ENCODE measurements at regions of chr6 and their contacts with region 1.

Region 1: GRCh38 chr6:152267967-152268845 is 369.0 kb downstream of the SYNE1 start:
- DNase-seq: no peak
- H3K4me3 ChIP-seq: no peak overlapping the region
- H3K27ac ChIP-seq: no peak overlapping the region
- H3K27me3 ChIP-seq: no peaks in the 10 kb centered on the region
- CTCF ChIP-seq: peak; percentile 61

Region 2: GRCh38 chr6:151647976-151648639 is 620.1 kb before region 1 on chr6:
- CTCF ChIA-PET with region 1: interaction called, 16 read pairs
- POLR2A ChIA-PET with region 1: no interaction called
- DNase-seq: no peak
- H3K4me3 ChIP-seq: no peak overlapping the region
- H3K27ac ChIP-seq: no peak overlapping the region
- H3K27me3 ChIP-seq: no peaks in the 10 kb centered on the region
- CTCF ChIP-seq: peak; percentile 10; the same call in 1 of the 2 replicates

Region 3: DNA sequence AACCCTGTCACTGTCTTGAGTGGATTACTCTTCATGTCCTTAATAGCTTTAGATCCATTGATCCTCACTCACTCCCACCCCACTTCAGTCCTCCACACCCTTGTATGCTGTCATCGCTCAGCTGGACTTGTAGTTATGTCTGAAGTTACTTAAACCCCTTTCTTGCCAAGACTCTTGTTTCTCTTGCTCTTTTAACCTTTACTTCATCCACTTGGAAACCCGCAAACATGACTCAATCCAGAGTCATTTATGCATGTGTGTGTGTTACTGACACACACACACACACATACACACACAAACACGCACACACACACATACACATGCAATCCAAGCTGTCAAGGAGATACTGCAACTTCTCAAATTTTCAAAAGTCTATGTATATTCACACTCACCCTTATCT is 27.1 kb after region 1 on chr6:
- CTCF ChIA-PET with region 1: interaction called, 19 read pairs
- POLR2A ChIA-PET with region 1: no interaction called
- DNase-seq: peak; percentile 93
- H3K4me3 ChIP-seq: no peak overlapping the region
- H3K27ac ChIP-seq: no peak overlapping the region
- H3K27me3 ChIP-seq: no peaks in the 10 kb centered on the region
- CTCF ChIP-seq: no peak

Region 4: DNA sequence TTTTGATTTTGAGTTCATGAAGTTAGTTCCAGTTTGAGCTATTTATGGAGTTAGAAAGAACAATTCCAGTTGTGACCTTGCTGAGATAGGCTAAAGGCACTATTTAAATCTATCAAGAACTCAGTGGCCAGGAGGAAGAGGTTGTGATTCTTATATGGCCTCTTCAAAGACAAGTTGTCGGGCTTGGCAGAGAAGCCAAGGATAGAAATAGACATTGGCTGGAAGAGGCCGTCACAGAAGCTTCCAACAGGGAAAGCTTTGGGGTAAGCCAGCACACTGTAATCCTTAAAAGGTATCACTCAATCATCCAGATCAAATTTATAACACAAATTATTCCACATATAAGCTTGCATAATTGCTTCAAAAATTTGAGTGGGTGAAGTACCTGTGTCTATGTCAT is 82.9 kb after region 1 on chr6:
- CTCF ChIA-PET with region 1: no interaction called
- POLR2A ChIA-PET with region 1: no interaction called
- DNase-seq: no peak
- H3K4me3 ChIP-seq: no peak overlapping the region
- H3K27ac ChIP-seq: no peak overlapping the region
- H3K27me3 ChIP-seq: no peaks in the 10 kb centered on the region
- CTCF ChIP-seq: no peak

Region 5: DNA sequence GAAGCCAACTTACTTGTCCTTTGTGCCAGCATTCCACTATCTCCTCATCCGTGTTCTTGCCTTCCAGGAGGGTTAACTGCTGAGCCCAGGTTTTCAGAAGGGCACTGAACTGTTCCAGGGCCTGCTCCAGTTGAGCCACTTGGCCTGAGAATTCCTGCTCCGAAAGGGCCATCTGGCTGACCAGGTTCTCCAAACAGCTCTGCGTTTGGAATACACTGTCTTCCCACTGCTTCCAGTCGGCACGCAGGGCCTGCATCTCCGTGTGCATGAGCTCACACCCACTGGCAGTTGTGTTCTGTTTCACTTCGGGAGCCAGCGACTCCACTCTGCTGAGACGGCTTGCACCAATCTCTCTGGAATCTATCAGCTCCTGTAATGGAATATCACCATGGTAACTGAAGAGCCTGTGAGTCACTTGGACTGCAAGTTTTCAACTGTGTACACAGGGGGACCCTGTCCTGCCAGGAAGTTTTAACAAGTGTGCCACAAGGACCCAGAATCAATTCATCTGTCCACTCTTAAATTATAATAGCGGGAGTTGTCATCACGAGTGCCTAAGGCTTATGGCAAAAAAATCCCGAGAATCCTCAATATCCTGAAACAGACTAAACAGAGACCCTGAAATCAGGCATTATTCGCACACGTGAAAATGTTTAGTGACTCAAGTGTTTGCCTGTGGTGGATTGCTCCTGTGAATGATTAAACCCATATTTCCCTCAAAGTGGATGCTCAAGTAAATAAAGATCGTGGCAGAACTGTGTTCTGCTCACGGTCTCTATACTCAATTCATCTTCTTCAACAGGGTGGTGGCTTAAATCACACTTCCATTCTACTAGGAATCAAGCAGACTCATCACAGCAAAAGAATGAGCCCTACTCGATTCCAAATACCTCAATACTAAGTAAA is 113.0 kb after region 1 on chr6:
- CTCF ChIA-PET with region 1: no interaction called
- POLR2A ChIA-PET with region 1: no interaction called
- DNase-seq: peak; percentile 88
- H3K4me3 ChIP-seq: peak overlapping the region; percentile 71
- H3K27ac ChIP-seq: peak overlapping the region; percentile 97
- H3K27me3 ChIP-seq: no peaks in the 10 kb centered on the region
- CTCF ChIP-seq: no peak

Measured in AG04450 (cell line).